Heart right ventricle (tissue), 16 donors: ENCODE measurements at regions of chr3 and their contacts with region 1.

Region 1: GRCh38 chr3:31544634-31545033 is 11.9 kb downstream of the STT3B start:
- DNase-seq: peak in 1 of 2 donors; percentile 22
- ATAC-seq: peak in 6 of 8 donors; percentile 25 to 73 (median 52)
- H3K4me3 ChIP-seq: peak overlapping the region in 1 of 10 donors; percentile 1
- H3K27ac ChIP-seq: peak overlapping the region in 3 of 10 donors; percentile 4 to 10 (median 7)
- H3K4me1 ChIP-seq: peaks cover 3 to 89% (median 37%) of the 10 kb centered on the region in 9 donors
- H3K27me3 ChIP-seq: no peaks in the 10 kb centered on the region
- CTCF ChIP-seq: no peak

Region 2: GRCh38 chr3:31505371-31506048 is 39.1 kb before region 1 on chr3:
- intact Hi-C with region 1: no loop called
- DNase-seq: no peak
- ATAC-seq: no peak
- H3K4me3 ChIP-seq: no peak overlapping the region
- H3K27ac ChIP-seq: no peak overlapping the region
- H3K4me1 ChIP-seq: peaks cover 0 to 13% (median 0%) of the 10 kb centered on the region in 9 donors
- H3K27me3 ChIP-seq: peaks cover 0 to 16% (median 9%) of the 10 kb centered on the region in 7 donors
- CTCF ChIP-seq: no peak

Region 3: DNA sequence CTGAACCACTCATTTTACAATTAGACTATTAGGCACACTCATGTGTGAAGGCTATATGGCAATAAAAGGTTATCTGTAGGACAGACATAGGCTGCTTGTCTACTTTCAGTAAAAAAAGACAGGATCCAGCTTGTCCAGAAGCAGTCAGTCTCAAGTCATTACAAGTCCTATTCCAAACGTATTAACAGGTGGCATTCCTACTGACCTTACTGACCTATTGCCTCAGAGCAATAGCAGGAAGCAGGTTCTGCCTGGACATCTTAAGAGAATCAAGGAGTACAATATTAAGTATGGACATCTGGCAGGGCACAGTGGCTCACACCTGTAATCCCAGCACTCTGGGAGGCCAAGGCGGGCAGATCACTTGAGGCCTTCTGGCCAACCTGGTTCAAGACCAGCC is 951.0 kb after region 1 on chr3:
- intact Hi-C with region 1: loop called in 1 of 10 experiments (anchors 5 kb)
- DNase-seq: no peak
- ATAC-seq: no peak
- H3K4me3 ChIP-seq: no peak overlapping the region
- H3K27ac ChIP-seq: no peak overlapping the region
- H3K4me1 ChIP-seq: peaks cover 0 to 69% (median 25%) of the 10 kb centered on the region in 9 donors
- H3K27me3 ChIP-seq: no peaks in the 10 kb centered on the region
- CTCF ChIP-seq: no peak